Ovary (tissue), 10 donors: ENCODE measurements at regions of chrX and their contacts with region 1.

Region 1: DNA sequence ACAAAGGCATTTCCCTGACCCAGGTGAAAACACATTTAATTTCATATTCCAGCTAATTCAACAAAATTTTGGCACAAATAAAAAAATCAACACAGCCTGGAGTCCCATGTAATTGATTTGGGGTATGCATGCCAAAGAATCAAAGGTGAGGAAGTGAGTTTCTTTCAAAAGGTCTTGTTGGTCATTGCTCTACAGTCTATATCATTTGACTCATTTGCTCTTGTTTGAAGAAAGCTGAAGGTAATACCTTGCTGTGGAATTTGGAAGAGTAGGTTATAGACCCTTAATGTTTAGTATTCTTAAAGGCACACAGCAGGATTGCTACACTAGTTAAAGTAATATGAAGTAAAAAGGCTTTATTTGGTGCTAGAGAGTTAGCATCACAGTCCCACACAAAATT is 25.4 kb downstream of the COL4A6 start:
- DNase-seq: no peak
- H3K4me3 ChIP-seq: no peak overlapping the region
- H3K27ac ChIP-seq: no peak overlapping the region
- H3K4me1 ChIP-seq: no peaks in the 10 kb centered on the region
- H3K27me3 ChIP-seq: no peaks in the 10 kb centered on the region
- CTCF ChIP-seq: no peak
- EP300 ChIP-seq: no peak
- POLR2A ChIP-seq: no peak

Region 2: GRCh38 chrX:108399427-108400162 is 13.2 kb before region 1 on chrX:
- intact Hi-C with region 1: no loop called
- DNase-seq: no peak
- H3K4me3 ChIP-seq: no peak overlapping the region
- H3K27ac ChIP-seq: no peak overlapping the region
- H3K4me1 ChIP-seq: no peaks in the 10 kb centered on the region
- H3K27me3 ChIP-seq: no peaks in the 10 kb centered on the region
- CTCF ChIP-seq: no peak
- EP300 ChIP-seq: no peak
- POLR2A ChIP-seq: no peak

Region 3: DNA sequence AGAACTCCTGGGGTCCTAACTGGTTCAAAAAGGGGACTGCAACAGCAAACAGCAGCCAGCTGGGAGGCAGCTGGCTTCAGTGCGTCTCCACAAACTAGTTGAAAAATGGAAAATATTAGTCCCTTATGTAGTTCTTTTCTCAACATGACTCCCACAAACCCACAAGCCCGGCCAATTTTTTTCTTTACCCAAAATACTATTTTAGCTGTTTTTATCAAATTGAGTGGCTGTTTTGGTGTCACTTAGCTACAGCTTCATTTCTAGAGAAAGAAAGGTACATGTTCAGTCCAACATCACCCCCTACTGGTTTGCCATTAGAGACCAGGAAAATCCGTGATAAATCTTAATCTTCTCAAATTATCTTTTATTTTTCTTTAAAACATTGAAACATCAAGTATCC is 971.9 kb after region 1 on chrX:
- intact Hi-C with region 1: loop called in 1 of 4 experiments (anchors 5 kb)
- DNase-seq: peak in 2 of 5 donors; percentile 9 to 19
- H3K4me3 ChIP-seq: no peak overlapping the region
- H3K27ac ChIP-seq: no peak overlapping the region
- H3K4me1 ChIP-seq: no peaks in the 10 kb centered on the region
- H3K27me3 ChIP-seq: no peaks in the 10 kb centered on the region
- CTCF ChIP-seq: peak in 2 of 3 donors; percentile 43 to 59
- EP300 ChIP-seq: no peak
- POLR2A ChIP-seq: no peak